Sigmoid colon (tissue), 7 donors: ENCODE measurements at regions of chr18 and their contacts with region 1.

Region 1: DNA sequence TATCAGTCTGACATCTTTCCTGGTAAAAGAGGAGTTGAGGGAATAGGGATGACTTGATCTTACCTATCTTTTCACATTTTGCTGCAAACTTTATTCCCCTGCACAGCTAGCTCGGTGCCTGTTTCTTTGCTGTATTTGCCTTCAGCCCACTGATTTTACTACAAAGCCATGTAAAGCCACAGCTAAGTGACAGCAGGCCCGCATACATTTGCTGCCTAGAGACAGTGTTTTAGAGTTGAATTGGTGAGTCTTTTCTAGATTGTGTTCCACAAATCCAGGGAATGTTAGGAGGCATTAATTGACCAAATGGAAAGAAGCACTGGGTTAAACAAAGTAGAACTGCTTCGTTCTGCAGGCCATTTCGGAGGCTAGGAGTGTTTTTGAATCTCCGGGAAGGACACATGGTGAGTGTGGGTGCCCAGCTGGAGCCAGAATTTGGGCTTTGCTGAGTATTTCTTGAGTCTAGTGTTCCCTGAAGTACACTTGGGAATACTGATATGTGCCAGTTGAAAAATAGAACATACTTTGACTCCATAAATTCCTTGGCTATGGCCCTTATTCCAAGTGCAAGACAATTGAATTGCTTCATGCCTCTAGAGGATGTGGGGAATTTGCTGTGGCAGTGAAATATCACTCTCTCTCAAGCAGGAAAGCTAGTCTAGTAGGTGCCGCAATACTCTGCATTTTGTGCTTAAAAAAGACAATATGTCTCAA is 329.8 kb downstream of the PTPRM start:
- DNase-seq: no peak
- H3K4me3 ChIP-seq: no peak overlapping the region
- H3K27ac ChIP-seq: no peak overlapping the region
- H3K4me1 ChIP-seq: peaks cover 0 to 21% (median 7%) of the 10 kb centered on the region in 4 donors
- H3K27me3 ChIP-seq: no peaks in the 10 kb centered on the region
- CTCF ChIP-seq: no peak
- EP300 ChIP-seq: no peak
- POLR2A ChIP-seq: no peak

Region 2: DNA sequence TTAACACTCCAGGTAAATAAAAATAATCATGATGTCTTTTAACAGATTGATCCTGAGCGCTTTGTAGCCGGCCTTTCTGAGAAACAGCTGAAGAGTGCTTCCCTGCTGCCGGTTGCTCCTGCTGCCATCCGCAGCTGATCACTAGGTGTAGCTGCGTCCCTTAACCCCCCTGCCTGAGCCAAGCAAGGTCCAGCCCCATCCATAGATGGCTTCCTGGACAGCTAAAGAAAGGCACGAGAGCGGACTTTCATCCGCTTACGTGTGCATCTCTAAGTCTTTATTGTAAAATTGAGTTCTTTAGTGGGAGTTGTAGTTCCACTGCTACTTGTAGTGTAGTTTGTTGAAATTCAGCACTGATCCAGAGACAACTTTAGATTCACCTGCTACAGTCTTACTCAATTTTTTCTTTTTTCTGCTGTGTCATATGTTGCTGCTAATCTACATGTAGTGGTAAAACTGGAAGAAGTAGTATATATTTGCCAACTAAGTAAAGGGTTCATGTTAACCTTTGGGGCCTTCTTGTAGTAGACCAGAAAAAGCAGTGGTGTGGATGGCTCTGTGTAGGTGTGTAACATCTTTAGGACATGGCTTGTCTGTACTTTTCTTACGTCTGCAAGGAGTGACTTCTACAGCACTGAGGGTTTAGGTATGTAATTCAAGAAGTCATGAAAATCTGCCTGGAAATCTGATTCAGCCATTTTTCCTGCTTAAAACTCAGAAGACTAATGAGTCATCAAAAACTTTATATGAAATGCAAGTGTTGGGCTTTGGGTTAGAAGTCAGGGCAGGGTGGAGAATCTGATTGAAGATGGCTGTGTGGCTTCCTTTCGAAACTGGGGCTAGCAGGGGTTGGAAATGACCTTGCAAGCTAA is 321.6 kb before region 1 on chr18:
- intact Hi-C with region 1: loop called (anchors 10 kb)
- DNase-seq: no peak
- H3K4me3 ChIP-seq: no peak overlapping the region
- H3K27ac ChIP-seq: no peak overlapping the region
- H3K4me1 ChIP-seq: peaks cover 0 to 48% (median 37%) of the 10 kb centered on the region in 4 donors
- H3K27me3 ChIP-seq: no peaks in the 10 kb centered on the region
- CTCF ChIP-seq: no peak
- EP300 ChIP-seq: no peak
- POLR2A ChIP-seq: no peak